H1 (cell line): ENCODE measurements at regions of chr3 and their contacts with region 1.

Region 1: DNA sequence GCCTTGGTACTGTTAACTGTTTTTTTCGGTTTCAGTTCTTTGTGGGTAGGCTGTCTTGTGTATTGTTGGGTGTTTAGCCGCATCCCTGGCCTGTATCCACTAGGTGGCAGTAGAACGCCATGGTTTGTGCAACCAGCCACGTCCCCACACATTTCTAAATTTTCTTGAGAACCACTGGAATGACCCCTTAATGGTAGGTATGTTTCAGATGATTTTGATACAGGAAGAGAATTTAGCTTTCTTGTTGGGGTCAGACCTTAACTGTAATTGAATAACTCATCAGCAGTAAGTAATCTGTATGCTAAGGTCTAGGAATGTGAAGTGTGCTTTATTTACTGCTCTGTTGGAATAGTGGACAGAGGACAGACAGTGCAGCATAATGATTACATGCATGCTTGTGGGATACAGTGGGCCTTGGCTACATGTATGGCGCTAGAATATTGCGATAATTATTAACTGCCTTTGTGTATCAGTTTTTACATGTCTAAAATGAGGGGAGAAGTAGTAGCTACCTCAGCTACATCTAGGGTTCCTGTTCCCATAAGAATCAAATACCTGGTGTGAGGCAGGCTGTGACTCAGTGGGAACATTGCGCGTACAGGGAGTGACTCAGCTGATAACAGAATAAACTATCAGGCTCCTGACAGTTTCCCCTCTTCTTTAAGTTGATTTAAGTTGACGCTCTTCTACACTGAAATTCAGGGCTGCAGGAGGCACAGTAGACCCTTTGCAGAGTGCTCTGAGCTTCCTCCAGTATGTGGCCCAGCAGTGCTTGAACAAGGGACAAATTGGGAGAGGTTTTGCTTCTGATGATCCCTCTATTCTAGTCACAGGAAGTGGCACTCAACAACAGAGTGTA is 25.0 kb upstream of the GPR171 start:
- DNase-seq: peak; percentile 33 to 84
- H3K4me3 ChIP-seq: no peak overlapping the region
- H3K27ac ChIP-seq: no peak overlapping the region
- H3K4me1 ChIP-seq: peaks cover 0 to 19% (median 9%) of the 10 kb centered on the region in 4 experiments; a peak in 4 of 7 replicates
- H3K27me3 ChIP-seq: no peaks in the 10 kb centered on the region
- CTCF ChIP-seq: peak; percentile 79 to 89 (median 85)
- EP300 ChIP-seq: no peak
- POLR2A ChIP-seq: no peak
- RAD21 ChIP-seq: peak; percentile 96 to 99

Region 2: DNA sequence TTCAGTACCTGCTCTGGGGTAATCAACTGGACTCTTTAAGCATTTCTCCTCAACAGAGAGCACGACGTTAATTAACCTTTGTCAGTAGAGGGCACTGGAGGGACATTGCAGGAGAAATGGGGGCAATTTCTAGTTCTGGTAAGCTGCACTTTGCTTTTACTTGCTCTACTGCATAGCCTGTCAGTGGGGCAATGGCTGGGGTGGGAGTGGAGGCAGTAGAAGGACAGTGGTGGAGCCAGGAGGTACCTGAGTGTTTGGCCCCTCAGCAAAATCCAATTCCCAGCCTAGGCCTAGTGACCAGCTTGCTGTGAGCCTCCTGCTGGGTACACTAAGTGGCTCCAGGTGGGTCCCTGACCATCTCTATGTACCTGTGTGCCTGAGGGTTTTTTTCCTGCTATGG is 160.9 kb before region 1 on chr3:
- CTCF ChIA-PET with region 1: no interaction called
- POLR2A ChIA-PET with region 1: no interaction called
- DNase-seq: peak in 1 of 2 experiments; percentile 53
- H3K4me3 ChIP-seq: no peak overlapping the region
- H3K27ac ChIP-seq: no peak overlapping the region
- H3K4me1 ChIP-seq: no peaks in the 10 kb centered on the region
- H3K27me3 ChIP-seq: peaks cover 0 to 1% (median 0%) of the 10 kb centered on the region in 4 experiments; a peak in 1 of 7 replicates
- CTCF ChIP-seq: peak in 2 of 3 experiments; percentile 68 to 77; a peak in 3 of 4 replicates
- EP300 ChIP-seq: no peak
- POLR2A ChIP-seq: no peak
- RAD21 ChIP-seq: peak; percentile 77 to 83

Region 3: DNA sequence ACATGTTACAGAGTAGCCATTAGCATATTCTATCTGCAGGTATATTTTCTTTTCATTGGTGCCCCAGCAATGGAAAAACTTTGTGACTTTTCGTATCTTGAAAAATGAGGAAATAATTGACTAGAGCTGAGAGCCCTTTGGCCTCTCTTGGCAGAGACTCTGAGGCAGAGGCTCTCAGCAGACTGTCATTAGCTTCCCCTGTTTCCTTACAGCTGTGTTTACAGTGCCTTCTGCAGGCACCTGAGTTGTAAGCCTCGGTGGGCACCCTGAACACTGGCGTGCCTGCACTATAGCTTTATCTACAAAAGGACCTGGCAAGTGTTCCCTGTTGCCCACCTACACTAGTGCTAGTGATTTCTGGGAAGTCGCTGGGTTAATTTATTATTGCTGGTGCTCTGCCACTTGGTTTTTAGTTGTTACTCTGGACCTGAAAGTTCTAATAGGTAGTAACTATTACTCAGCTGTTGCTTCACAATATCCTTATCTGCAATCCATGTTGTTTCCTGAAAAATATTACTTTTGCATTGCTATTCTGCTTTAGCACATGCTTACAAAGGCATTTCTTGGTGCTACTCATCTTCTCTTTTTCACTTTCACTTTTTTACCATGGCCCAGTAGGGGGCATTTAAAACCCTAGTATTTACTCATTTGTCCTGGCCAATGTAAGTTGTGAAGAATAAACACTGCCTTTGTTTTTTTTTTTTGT is 17.2 kb before region 1 on chr3:
- CTCF ChIA-PET with region 1: interaction called, 32 read pairs
- POLR2A ChIA-PET with region 1: no interaction called
- DNase-seq: no peak
- H3K4me3 ChIP-seq: no peak overlapping the region
- H3K27ac ChIP-seq: no peak overlapping the region
- H3K4me1 ChIP-seq: peaks cover 0 to 7% (median 2%) of the 10 kb centered on the region in 4 experiments; a peak in 4 of 7 replicates
- H3K27me3 ChIP-seq: no peaks in the 10 kb centered on the region
- CTCF ChIP-seq: no peak
- EP300 ChIP-seq: no peak
- POLR2A ChIP-seq: no peak
- RAD21 ChIP-seq: no peak

Region 4: GRCh38 chr3:151256749-151257148 is 28.7 kb after region 1 on chr3:
- CTCF ChIA-PET with region 1: interaction called, 37 read pairs
- POLR2A ChIA-PET with region 1: interaction called, 3 read pairs
- DNase-seq: no peak
- H3K4me3 ChIP-seq: no peak overlapping the region
- H3K27ac ChIP-seq: no peak overlapping the region
- H3K4me1 ChIP-seq: no peaks in the 10 kb centered on the region
- H3K27me3 ChIP-seq: no peaks in the 10 kb centered on the region
- CTCF ChIP-seq: no peak
- EP300 ChIP-seq: no peak
- POLR2A ChIP-seq: no peak
- RAD21 ChIP-seq: no peak

Region 5: DNA sequence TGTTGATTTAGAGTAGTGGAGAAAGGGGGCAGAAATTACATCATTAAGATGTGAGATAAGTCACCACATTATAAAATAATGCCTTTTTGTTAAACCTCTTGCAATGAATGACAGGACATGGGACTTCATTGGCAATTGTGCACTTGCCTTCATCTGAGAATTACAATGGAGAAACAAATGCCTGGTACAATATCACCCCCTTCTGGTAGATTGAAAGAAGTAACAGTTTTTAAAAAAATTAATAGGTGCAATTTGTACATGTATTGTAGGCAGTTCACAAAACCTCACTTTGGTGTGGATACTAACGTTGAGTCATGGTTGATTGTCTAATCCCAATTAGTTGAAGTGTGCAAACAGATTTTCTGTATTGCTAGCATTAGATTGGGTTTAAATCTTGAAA is 54.9 kb after region 1 on chr3:
- CTCF ChIA-PET with region 1: interaction called, 155 read pairs
- POLR2A ChIA-PET with region 1: no interaction called
- DNase-seq: no peak
- H3K4me3 ChIP-seq: no peak overlapping the region
- H3K27ac ChIP-seq: no peak overlapping the region
- H3K4me1 ChIP-seq: no peaks in the 10 kb centered on the region; a peak in 1 of 7 replicates
- H3K27me3 ChIP-seq: no peaks in the 10 kb centered on the region
- CTCF ChIP-seq: peak in 2 of 3 experiments; percentile 53 to 57; a peak in 2 of 4 replicates
- EP300 ChIP-seq: no peak
- POLR2A ChIP-seq: no peak
- RAD21 ChIP-seq: peak; percentile 79

Region 6: GRCh38 chr3:151327571-151328198 is 99.6 kb after region 1 on chr3:
- CTCF ChIA-PET with region 1: interaction called, 16 read pairs
- POLR2A ChIA-PET with region 1: no interaction called
- DNase-seq: no peak
- H3K4me3 ChIP-seq: no peak overlapping the region
- H3K27ac ChIP-seq: no peak overlapping the region
- H3K4me1 ChIP-seq: no peaks in the 10 kb centered on the region; a peak in 2 of 7 replicates
- H3K27me3 ChIP-seq: no peaks in the 10 kb centered on the region
- CTCF ChIP-seq: no peak; a peak in 1 of 4 replicates
- EP300 ChIP-seq: no peak
- POLR2A ChIP-seq: no peak
- RAD21 ChIP-seq: peak in 1 of 2 experiments; percentile 6; a peak in 1 of 4 replicates